ENCODE measurements at regions of chr10 and their contacts with region 1.

Region 1: DNA sequence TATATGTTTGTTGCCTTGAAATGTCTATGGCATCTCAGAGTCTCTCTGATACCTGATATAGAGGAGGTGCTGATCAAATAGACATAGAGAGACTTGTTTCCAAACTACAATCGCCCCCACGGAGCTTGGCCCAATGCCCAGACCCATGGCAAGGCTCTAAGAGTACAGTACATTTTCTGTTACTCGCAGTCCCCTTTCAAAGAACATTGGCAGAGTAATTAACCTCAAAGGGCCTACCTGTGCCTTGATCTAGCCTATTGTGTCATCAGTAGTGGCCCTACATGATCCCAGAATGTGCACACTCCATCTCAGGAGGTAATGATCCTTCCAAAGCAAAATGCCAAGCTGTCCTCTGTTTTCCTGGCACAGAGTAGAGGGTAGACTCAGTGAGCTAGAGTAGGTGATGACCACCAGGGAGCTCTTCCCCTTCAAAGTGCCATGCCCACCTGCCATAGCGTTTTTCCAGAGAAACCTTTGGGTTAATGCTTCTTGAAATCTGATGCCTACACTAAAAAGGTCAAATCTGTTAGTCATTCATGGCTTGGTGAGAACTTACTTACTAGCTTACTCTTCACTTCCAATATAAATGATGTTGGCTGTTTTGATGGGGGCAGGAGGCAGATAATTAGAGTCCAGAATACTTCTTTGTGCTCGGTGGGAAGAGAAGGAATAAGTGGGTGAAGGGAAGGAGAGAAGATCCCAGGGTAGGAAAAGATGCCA is 41.2 kb upstream of the ACSL5 start:
- DNase-seq: no peak
- H3K4me3 ChIP-seq: no peak overlapping the region
- H3K27ac ChIP-seq: no peak overlapping the region
- H3K4me1 ChIP-seq: no peaks in the 10 kb centered on the region
- H3K27me3 ChIP-seq: no peaks in the 10 kb centered on the region
- CTCF ChIP-seq: no peak
- POLR2A ChIP-seq: no peak

Region 2: GRCh38 chr10:112303528-112303927 is 29.1 kb before region 1 on chr10:
- intact Hi-C with region 1: loop called (anchors 1 kb)
- DNase-seq: no peak
- H3K4me3 ChIP-seq: no peak overlapping the region
- H3K27ac ChIP-seq: no peak overlapping the region
- H3K4me1 ChIP-seq: no peaks in the 10 kb centered on the region
- H3K27me3 ChIP-seq: no peaks in the 10 kb centered on the region
- CTCF ChIP-seq: no peak
- POLR2A ChIP-seq: no peak

Region 3: GRCh38 chr10:112360306-112361270 is 27.9 kb after region 1 on chr10:
- intact Hi-C with region 1: no loop called
- DNase-seq: peak; percentile 66 to 78
- H3K4me3 ChIP-seq: no peak overlapping the region
- H3K27ac ChIP-seq: peak overlapping the region; percentile 71 to 77
- H3K4me1 ChIP-seq: peaks cover 7 to 10% of the 10 kb centered on the region in 2 donors
- H3K27me3 ChIP-seq: no peaks in the 10 kb centered on the region
- CTCF ChIP-seq: no peak
- POLR2A ChIP-seq: no peak

Region 4: GRCh38 chr10:112507046-112507445 is 174.4 kb after region 1 on chr10:
- intact Hi-C with region 1: no loop called
- DNase-seq: no peak
- H3K4me3 ChIP-seq: no peak overlapping the region
- H3K27ac ChIP-seq: no peak overlapping the region
- H3K4me1 ChIP-seq: no peaks in the 10 kb centered on the region
- H3K27me3 ChIP-seq: no peaks in the 10 kb centered on the region
- CTCF ChIP-seq: no peak
- POLR2A ChIP-seq: no peak

Measured in breast epithelium (tissue), 4 donors.